ENCODE measurements at regions of chr2 and their contacts with region 1.

Region 1: DNA sequence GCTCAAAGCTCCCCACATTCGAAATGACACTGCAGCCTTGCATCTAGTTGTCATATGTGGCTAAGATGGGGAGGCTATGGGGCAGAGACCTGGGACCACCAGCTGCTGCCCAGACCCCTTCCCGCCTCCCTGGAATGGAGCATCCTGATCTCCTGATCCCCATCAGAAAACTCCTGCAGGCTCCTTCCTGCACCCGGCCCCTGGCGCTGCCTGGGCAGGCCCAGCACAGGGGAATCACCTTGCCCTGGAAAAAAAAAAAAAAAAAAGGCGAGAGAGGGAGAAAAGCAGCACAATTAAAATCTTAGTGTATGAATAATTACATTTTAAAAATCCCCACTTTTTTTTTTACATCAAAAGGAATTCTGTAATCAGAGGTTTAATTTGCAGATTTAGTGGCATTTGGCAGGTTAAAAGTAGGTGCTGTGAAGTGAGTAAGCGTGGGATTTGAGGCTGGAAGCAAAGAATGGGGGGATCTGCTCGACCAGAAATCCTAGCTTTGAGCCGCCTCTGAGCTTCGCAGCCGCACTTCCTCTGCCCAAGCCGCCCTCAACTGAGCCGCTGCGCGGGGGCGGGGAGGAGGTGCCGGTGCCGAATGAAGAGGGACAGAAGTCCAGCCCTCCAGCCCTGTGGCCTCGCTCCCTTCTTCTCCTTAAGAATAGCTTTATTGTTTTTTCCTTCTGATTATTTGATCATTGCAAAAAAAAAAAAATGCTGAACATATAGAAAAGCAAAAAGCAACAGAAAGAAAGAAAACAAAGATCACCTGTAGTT is 30.0 kb downstream of the THNSL2 start:
- DNase-seq: no peak
- ATAC-seq: peak; percentile 45
- H3K4me3 Mint-ChIP-seq: peak overlapping the region; percentile 8
- H3K27ac Mint-ChIP-seq: no peak overlapping the region
- H3K4me1 Mint-ChIP-seq: peaks cover 11% of the 10 kb centered on the region
- H3K27me3 Mint-ChIP-seq: peaks cover 58% of the 10 kb centered on the region
- CTCF ChIP-seq: no peak

Region 2: DNA sequence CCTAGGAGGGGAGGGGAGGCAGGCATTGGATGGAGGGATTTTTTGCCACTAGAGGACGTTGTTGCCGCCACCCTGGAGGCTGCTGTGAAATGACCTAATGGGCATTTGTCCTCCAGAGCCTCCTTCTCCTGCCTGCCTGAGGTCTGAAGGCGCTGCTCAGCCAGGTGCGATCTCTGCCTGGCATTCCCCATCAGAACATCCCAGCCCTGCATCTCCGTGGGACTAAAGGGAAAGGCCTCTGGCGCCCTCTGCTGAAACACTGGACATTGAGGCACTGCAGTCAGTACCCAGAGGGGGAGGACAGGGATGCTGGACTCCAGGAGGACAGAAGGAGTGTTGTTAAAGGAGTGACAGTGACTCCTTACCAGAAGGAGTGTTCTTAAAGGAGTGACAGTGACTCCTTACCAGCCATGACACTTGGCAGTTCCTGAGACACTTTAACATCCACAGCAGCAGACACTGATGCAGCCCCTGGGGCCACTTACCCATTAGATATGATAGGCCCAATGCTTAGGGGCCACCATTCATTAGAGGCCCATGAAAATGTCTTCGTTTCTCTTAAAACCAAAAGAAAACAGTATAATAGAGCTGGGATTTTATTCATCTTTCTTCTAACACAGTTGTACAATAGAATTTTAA is 12.9 kb before region 1 on chr2:
- CTCF ChIA-PET with region 1: no interaction called
- POLR2A ChIA-PET with region 1: no interaction called
- intact Hi-C with region 1: loop called (anchors 1 kb)
- DNase-seq: no peak
- ATAC-seq: peak; percentile 50
- H3K4me3 Mint-ChIP-seq: no peak overlapping the region
- H3K27ac Mint-ChIP-seq: no peak overlapping the region
- H3K4me1 Mint-ChIP-seq: peaks cover 14% of the 10 kb centered on the region
- H3K27me3 Mint-ChIP-seq: peaks cover 17% of the 10 kb centered on the region
- CTCF ChIP-seq: no peak